Vagina (tissue), 2 donors: ENCODE measurements at regions of chr6 and their contacts with region 1.

Region 1: GRCh38 chr6:158072083-158072721 is 90.5 kb downstream of the SYNJ2 start:
- DNase-seq: no peak
- H3K4me3 ChIP-seq: no peak overlapping the region
- H3K27ac ChIP-seq: peak overlapping the region; percentile 59
- H3K4me1 ChIP-seq: peaks cover 14% of the 10 kb centered on the region
- H3K27me3 ChIP-seq: no peaks in the 10 kb centered on the region
- CTCF ChIP-seq: peak; percentile 63 to 87 (median 83)
- POLR2A ChIP-seq: no peak

Region 2: DNA sequence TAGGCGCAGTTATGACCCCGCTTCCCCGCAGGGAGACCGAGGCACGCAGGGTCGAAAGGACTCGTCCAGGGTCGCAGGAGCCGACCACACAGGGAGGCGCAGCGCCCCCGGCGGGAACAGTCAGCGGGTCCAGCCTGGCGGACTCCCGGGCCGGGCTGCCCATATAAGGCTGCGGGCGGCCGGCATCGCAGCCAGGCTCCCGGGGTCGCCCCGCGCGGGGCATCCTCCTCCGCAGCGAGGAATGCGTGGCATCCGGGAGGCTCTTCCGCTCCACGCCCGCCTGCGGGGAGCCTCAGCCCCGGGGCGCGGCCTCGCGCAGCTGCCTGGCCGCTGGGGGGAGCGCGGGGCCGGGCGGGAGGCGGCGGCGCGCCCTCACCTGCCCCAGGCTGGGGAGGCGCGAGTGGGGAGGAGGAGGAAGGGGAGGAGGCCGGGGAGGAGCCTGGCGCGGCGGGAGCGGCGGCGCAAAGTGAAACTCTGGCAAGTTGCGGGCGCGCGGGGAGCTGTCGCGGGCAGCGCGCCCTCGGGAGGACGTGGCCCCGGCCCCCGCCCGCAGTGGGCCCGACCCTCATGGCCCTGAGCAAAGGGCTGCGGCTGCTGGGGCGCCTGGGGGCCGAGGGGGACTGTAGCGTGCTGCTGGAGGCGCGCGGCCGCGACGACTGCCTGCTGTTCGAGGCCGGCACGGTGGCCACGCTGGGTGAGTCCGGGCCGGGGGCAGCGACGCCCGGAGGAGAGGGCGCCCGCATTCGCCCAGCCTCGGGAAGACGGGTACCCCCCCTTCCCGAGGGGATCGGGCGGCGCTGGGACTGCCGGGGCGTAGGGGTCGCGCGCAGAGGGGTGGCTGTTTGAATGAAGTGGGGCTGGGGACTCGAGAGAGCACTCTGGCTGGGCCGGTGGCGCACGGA is 90.6 kb before region 1 on chr6 and contains the start of gene SYNJ2:
- intact Hi-C with region 1: loop called (anchors 5 kb)
- DNase-seq: no peak
- H3K4me3 ChIP-seq: peak within 1 kb of the TSS; percentile 62 to 96
- H3K27ac ChIP-seq: peak within 1 kb of the TSS; percentile 86
- H3K4me1 ChIP-seq: peaks cover 38% of the 10 kb centered on the region
- H3K27me3 ChIP-seq: no peaks in the 10 kb centered on the region
- CTCF ChIP-seq: peak; percentile 5 to 40 (median 39)
- POLR2A ChIP-seq: peak in 1 of 2 donors; percentile 33
- total RNA-seq, gene SYNJ2: 8.3 TPM